A673 (cell line): ENCODE measurements at regions of chr16 and their contacts with region 1.

Region 1: DNA sequence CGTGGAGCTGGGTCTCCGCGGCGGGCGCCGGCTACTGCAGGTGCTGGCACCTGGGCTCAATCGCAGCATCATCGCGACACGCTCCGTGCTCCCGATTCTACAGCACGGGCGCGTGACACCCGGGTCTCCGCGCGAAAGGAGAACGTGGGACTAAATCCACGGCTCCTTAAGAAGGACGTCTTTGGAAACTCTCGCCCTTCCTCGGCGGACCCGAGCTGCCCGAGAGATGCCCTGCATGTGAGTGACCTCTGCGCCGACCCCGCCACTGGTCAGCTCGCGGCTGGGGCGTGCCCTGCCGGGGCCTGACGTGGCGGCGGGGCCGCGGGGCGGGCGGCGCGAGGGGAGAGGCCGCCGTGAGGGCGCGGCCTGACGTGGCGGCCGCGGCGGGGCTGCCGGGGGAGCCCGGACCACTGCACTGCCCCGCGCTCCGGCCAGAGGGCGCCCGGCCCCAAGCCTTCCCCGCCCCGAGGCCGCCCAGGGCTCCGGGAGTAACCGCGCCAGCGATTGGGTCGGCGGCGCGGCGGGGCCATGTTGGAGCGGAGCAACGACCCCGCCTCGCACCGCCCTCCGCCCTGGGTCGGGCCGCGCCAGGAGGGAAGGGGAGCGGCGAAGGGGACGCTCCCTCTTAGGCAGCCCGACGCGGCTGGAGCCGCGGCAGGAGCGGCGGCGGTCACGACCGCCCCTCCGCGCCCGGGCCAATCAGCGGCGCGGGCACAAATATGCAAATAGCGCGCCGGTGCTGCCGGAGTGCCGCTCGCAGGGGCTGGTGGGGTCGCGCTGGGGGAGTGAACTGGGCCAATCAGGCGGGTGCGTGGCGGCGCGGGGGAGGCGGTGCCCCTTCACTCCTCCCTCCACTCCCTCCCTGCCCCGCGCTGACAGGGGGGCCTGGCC is 75.6 kb downstream of the CHD9 start:
- DNase-seq: peak; percentile 98
- H3K4me3 ChIP-seq: peak overlapping the region; percentile 83
- H3K27ac ChIP-seq: peak overlapping the region; percentile 79
- H3K4me1 ChIP-seq: peaks cover 38% of the 10 kb centered on the region
- H3K27me3 ChIP-seq: no peaks in the 10 kb centered on the region
- CTCF ChIP-seq: peak; percentile 25; the same call in 1 of the 2 replicates

Region 2: GRCh38 chr16:53159781-53160436 is 29.5 kb after region 1 on chr16:
- CTCF ChIA-PET with region 1: no interaction called
- POLR2A ChIA-PET with region 1: no interaction called
- intact Hi-C with region 1: no loop called
- DNase-seq: peak; percentile 80
- H3K4me3 ChIP-seq: no peak overlapping the region
- H3K27ac ChIP-seq: no peak overlapping the region
- H3K4me1 ChIP-seq: no peaks in the 10 kb centered on the region
- H3K27me3 ChIP-seq: no peaks in the 10 kb centered on the region
- CTCF ChIP-seq: peak; percentile 78

Region 3: GRCh38 chr16:53207810-53208752 is 77.7 kb after region 1 on chr16:
- CTCF ChIA-PET with region 1: no interaction called
- POLR2A ChIA-PET with region 1: no interaction called
- intact Hi-C with region 1: loop called (anchors 2 kb)
- DNase-seq: peak; percentile 94
- H3K4me3 ChIP-seq: peak overlapping the region; percentile 56
- H3K27ac ChIP-seq: peak overlapping the region; percentile 88
- H3K4me1 ChIP-seq: peaks cover 27% of the 10 kb centered on the region
- H3K27me3 ChIP-seq: no peaks in the 10 kb centered on the region
- CTCF ChIP-seq: peak; percentile 75

Region 4: GRCh38 chr16:53249331-53249730 is 118.9 kb after region 1 on chr16:
- CTCF ChIA-PET with region 1: no interaction called
- POLR2A ChIA-PET with region 1: no interaction called
- intact Hi-C with region 1: no loop called
- DNase-seq: no peak
- H3K4me3 ChIP-seq: no peak overlapping the region
- H3K27ac ChIP-seq: no peak overlapping the region
- H3K4me1 ChIP-seq: peaks cover 11% of the 10 kb centered on the region
- H3K27me3 ChIP-seq: no peaks in the 10 kb centered on the region
- CTCF ChIP-seq: no peak